A549 (cell line): ENCODE measurements at regions of chr13 and their contacts with region 1.

Region 1: DNA sequence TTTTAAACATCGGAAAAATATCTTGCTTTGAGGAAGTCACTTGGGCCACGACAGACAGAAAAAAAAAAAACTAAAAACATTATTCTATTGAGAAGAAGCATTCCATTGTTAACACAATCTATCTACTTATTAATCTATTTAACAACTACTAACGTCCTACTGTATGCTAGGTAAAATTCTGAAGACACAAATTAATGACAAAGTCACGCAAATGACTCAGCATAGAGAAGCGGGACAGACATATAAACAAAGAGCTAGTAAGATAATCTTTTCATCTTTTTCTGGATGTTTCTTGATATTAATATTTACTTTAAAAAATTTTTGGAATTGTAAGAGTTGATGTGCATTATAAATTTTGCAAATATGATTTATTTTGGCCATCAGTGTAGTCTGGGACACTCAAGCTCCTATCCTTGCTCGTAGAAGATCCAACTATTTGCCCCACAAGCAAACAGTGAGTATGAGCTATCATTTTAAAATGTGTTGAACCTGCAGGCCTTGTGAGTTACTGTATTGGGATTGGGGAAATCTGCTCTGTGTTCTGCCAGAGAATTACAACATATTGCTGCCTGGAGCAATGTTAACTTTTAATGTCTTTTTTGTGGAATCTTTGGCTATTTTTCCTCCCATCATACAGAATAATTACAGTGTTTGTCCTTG is 109.1 kb downstream of the PCDH9 start:
- DNase-seq: peak in 1 of 2 experiments; percentile 86
- ATAC-seq: peak; percentile 83 to 93
- H3K4me3 ChIP-seq: peak overlapping the region; percentile 29; the same call in 2 of the 3 replicates
- H3K27ac ChIP-seq: peak overlapping the region; percentile 88 to 93
- H3K4me1 ChIP-seq: peaks cover 81% of the 10 kb centered on the region
- CTCF ChIP-seq: no peak
- EP300 ChIP-seq: peak; percentile 68 to 84; a peak in 3 of 5 replicates
- POLR2A ChIP-seq: no peak
- RAD21 ChIP-seq: peak in 1 of 2 experiments; percentile 20; a peak in 3 of 5 replicates

Region 2: GRCh38 chr13:67100723-67101122 is 20.3 kb before region 1 on chr13:
- CTCF ChIA-PET with region 1: no interaction called
- POLR2A ChIA-PET with region 1: interaction called, 13 read pairs
- DNase-seq: peak in 1 of 2 experiments; percentile 86
- ATAC-seq: peak; percentile 75 to 87
- H3K4me3 ChIP-seq: peak overlapping the region; percentile 50
- H3K27ac ChIP-seq: peak overlapping the region; percentile 83 to 89
- H3K4me1 ChIP-seq: peaks cover 29% of the 10 kb centered on the region
- CTCF ChIP-seq: no peak
- EP300 ChIP-seq: no peak
- POLR2A ChIP-seq: no peak
- RAD21 ChIP-seq: no peak

Region 3: GRCh38 chr13:67353941-67354340 is 232.9 kb after region 1 on chr13:
- CTCF ChIA-PET with region 1: no interaction called
- POLR2A ChIA-PET with region 1: no interaction called
- DNase-seq: no peak
- ATAC-seq: no peak
- H3K4me3 ChIP-seq: no peak overlapping the region
- H3K27ac ChIP-seq: no peak overlapping the region
- H3K4me1 ChIP-seq: no peaks in the 10 kb centered on the region
- CTCF ChIP-seq: no peak
- EP300 ChIP-seq: no peak
- POLR2A ChIP-seq: no peak
- RAD21 ChIP-seq: no peak